CD4-positive, alpha-beta memory T cell (primary cell): ENCODE measurements at regions of chr1 and their contacts with region 1.

Region 1: GRCh38 chr1:156445789-156446263 is 54.7 kb downstream of the MEF2D start:
- DNase-seq: peak; percentile 71 to 80 (median 74)
- H3K4me3 ChIP-seq: no peak overlapping the region
- H3K4me3 Mint-ChIP-seq: peak overlapping the region in 2 of 8 donors; percentile 43 to 60
- H3K27ac ChIP-seq: no peak overlapping the region
- H3K27ac Mint-ChIP-seq: peak overlapping the region in 2 of 7 donors; percentile 28 to 63
- H3K4me1 ChIP-seq: peaks cover 6% of the 10 kb centered on the region
- H3K4me1 Mint-ChIP-seq: peaks cover 3 to 8% (median 7%) of the 10 kb centered on the region in 4 donors
- H3K27me3 ChIP-seq: peaks cover 23% of the 10 kb centered on the region
- H3K27me3 Mint-ChIP-seq: peaks cover 42 to 44% of the 10 kb centered on the region in 2 donors

Region 2: DNA sequence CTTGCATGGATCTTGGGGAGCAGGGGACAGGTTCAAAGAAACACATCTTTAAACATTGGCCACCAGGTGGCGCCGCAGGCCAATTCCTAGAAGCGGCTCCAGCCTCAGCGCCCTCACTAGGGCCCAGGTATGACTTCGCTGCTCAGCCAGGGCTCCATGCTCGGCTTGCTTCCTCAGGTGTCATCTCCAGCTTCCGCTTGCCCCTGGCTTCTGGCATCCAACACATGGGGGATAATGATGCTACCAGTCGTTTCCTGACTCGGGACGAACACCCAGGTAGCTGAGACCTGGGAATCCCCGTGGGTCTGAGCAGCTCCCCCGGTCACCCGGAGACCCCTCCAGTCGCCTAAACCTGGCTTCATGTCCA is 355.0 kb before region 1 on chr1:
- CTCF ChIA-PET with region 1: no interaction called
- POLR2A ChIA-PET with region 1: no interaction called
- intact Hi-C with region 1: loop called (anchors 1 kb)
- DNase-seq: peak; percentile 78 to 84 (median 81)
- H3K4me3 ChIP-seq: no peak overlapping the region
- H3K4me3 Mint-ChIP-seq: peak overlapping the region in 1 of 8 donors; percentile 16
- H3K27ac ChIP-seq: no peak overlapping the region
- H3K27ac Mint-ChIP-seq: peak overlapping the region in 5 of 7 donors; percentile 11 to 79 (median 61)
- H3K4me1 ChIP-seq: peaks cover 6% of the 10 kb centered on the region
- H3K4me1 Mint-ChIP-seq: peaks cover 6 to 18% (median 12%) of the 10 kb centered on the region in 4 donors
- H3K27me3 ChIP-seq: no peaks in the 10 kb centered on the region
- H3K27me3 Mint-ChIP-seq: peaks cover 6 to 7% of the 10 kb centered on the region in 2 donors

Region 3: DNA sequence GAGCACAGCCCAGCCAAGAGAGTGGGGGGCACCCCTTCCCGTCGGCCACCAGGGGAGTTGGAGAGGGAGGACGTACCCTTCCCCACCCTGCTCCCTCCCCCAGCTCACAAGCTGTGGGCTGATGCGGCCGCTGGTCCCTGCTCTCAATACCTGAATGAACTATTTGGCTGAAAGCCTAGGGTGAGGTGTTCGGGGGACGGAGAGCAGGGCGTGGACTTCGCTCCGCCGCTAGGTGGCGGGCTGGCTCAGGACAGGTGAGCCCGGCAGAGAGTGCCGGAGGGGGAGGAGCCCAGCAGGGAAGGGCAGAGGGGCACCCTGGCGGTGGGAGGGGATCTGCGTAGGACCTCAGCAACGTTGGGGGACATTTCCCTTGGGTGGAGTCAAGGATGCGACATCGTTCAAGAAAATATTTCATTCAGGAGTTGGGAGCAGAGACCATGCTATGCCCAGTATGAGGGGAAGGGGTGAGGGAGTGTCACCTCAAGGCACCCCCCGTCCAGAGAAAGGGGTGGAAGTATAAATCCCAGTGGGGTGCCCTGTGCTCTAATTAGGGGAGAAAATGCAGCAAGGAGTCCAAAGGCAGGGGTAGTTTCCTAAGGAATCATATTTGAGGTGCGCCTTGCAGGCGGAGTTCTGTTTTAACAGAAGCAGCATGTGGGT is 88.8 kb before region 1 on chr1:
- CTCF ChIA-PET with region 1: interaction called, 25 read pairs
- POLR2A ChIA-PET with region 1: no interaction called
- intact Hi-C with region 1: loop called (anchors 1 kb)
- DNase-seq: peak; percentile 43 to 69 (median 61)
- H3K4me3 ChIP-seq: no peak overlapping the region
- H3K4me3 Mint-ChIP-seq: peak overlapping the region in 2 of 8 donors; percentile 26 to 46
- H3K27ac ChIP-seq: no peak overlapping the region
- H3K27ac Mint-ChIP-seq: no peak overlapping the region
- H3K4me1 ChIP-seq: peaks cover 6% of the 10 kb centered on the region
- H3K4me1 Mint-ChIP-seq: peaks cover 4 to 7% (median 5%) of the 10 kb centered on the region in 4 donors
- H3K27me3 ChIP-seq: peaks cover 4% of the 10 kb centered on the region
- H3K27me3 Mint-ChIP-seq: peaks cover 8 to 19% of the 10 kb centered on the region in 2 donors

Region 4: DNA sequence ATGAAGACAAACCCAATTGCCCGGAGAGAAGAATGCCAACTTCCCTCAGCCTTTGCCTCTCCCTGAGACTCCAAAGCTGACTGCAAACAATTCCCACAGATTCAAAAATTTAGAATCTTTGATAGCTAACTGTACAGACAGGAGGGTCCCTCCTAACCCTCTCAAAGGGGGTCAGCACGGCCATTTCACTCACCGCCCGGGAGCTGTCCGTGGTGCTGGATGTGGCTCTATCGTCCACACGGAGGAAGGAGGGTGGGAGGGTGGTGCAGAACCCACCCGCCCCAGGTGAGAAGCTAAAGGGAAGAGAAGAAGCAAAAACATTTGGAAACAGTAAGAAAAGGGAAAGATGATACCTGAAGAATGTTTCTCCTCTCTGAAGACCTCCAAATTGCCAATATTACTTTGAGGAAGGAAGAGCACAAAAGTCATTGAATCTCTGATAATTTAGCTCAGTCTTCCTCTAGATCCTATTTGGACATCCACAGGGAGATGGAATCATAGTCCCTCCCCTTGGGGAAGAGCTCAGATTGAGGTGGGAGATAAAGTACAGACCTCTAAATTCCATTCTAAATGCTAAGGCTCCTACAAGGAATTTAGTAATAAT is 31.3 kb before region 1 on chr1:
- CTCF ChIA-PET with region 1: interaction called, 11 read pairs
- POLR2A ChIA-PET with region 1: no interaction called
- intact Hi-C with region 1: no loop called
- DNase-seq: no peak
- H3K4me3 ChIP-seq: no peak overlapping the region
- H3K4me3 Mint-ChIP-seq: no peak overlapping the region
- H3K27ac ChIP-seq: no peak overlapping the region
- H3K27ac Mint-ChIP-seq: no peak overlapping the region
- H3K4me1 ChIP-seq: peaks cover 4% of the 10 kb centered on the region
- H3K4me1 Mint-ChIP-seq: peaks cover 3 to 7% (median 6%) of the 10 kb centered on the region in 4 donors
- H3K27me3 ChIP-seq: peaks cover 8% of the 10 kb centered on the region
- H3K27me3 Mint-ChIP-seq: peaks cover 23 to 38% of the 10 kb centered on the region in 2 donors

Region 5: DNA sequence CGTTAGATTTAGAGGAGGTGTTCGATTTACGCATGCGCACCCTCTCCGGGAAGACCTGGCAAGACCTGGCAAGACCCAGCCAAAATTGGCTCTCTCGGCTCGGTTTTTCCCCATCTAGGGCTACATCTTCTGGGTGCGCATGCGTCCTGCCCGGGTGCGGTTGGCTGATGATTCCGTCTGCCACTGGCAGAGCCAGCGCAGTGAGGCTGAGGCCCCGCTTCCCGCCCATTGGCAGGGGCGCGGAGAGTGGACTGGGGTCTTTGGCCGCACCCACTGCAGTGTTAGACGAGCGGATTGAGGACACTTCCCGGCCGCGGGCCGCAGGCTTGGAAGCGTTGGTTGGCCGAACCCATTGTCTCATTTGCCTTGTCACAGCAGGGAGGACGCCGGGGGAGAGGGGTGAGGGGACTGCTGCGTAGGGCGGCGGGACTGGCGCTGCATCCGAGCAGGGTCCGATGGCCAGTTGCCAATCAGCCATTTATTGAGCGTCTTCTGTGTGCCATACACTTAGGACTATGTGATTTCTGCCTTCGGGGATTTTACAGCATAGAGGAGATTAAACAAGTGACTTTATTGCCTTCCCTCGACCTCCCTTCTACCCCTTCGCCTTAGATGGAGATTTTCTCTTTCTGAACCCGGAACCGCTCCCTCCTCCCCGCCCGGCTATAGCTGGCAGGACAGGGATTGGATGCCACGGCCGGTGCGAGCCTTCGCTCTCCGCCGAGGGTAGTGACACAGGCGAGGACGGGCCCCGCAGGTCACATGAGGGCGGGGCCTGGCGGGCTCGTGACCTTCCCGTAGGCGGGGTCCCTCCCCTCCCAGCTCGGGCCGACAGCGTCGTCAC is 11.0 kb after region 1 on chr1:
- CTCF ChIA-PET with region 1: interaction called, 29 read pairs
- POLR2A ChIA-PET with region 1: interaction called, 5 read pairs
- intact Hi-C with region 1: no loop called
- DNase-seq: peak; percentile 95 to 99 (median 97)
- H3K4me3 ChIP-seq: peak overlapping the region; percentile 61 to 81
- H3K4me3 Mint-ChIP-seq: peak overlapping the region; percentile 92 to 97 (median 94)
- H3K27ac ChIP-seq: peak overlapping the region; percentile 99
- H3K27ac Mint-ChIP-seq: peak overlapping the region; percentile 98 to 100 (median 99)
- H3K4me1 ChIP-seq: peaks cover 17% of the 10 kb centered on the region
- H3K4me1 Mint-ChIP-seq: peaks cover 7 to 26% (median 12%) of the 10 kb centered on the region in 4 donors
- H3K27me3 ChIP-seq: no peaks in the 10 kb centered on the region
- H3K27me3 Mint-ChIP-seq: no peaks in the 10 kb centered on the region

Region 6: DNA sequence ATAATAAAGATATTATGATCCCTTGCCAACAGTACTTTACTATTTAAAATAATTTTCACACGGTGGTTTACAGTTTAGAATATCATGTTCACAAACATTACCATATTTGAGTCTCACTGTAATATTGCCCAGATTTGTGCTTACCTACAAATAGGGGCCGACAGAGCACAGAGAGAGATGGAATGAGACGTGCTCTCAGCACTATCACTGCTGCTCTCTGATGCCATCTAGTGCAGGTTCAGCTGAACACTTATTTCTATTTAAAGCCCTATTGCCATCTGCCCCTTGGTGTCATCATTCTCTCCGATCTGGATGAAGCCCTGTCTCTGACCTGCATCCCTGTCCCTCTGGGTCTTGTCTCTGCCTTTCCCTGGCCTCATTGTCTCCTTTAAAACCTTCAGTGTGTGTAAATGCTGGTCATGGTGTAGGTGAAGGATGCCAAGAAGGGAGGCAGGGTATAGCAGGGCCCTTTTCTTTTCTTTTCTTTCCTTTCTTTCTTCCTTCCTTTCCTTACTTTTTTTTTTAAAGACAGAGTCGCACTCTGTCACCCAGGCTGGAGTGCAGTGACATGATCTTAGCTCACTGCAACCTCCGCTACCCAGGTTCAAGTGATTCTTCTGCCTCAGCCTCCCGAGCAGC is 162.3 kb after region 1 on chr1:
- CTCF ChIA-PET with region 1: interaction called, 15 read pairs
- POLR2A ChIA-PET with region 1: interaction called, 4 read pairs
- intact Hi-C with region 1: no loop called
- DNase-seq: peak; percentile 68 to 75 (median 71)
- H3K4me3 ChIP-seq: no peak overlapping the region
- H3K4me3 Mint-ChIP-seq: no peak overlapping the region
- H3K27ac ChIP-seq: no peak overlapping the region
- H3K27ac Mint-ChIP-seq: peak overlapping the region in 2 of 7 donors; percentile 5 to 46
- H3K4me1 ChIP-seq: peaks cover under 1% of the 10 kb centered on the region
- H3K4me1 Mint-ChIP-seq: peaks cover 2 to 9% (median 7%) of the 10 kb centered on the region in 4 donors
- H3K27me3 ChIP-seq: no peaks in the 10 kb centered on the region
- H3K27me3 Mint-ChIP-seq: peaks cover 7% of the 10 kb centered on the region in 2 donors